GM10248 (cell line): ENCODE measurements at regions of chr14 and their contacts with region 1.

Region 1: GRCh38 chr14:75982266-75983018 is 647 bp upstream of the TGFB3 start:
- DNase-seq: peak; percentile 82
- CTCF ChIP-seq: peak; percentile 84

Region 2: GRCh38 chr14:75487155-75487671 is 495.2 kb before region 1 on chr14:
- CTCF ChIA-PET with region 1: no interaction called
- POLR2A ChIA-PET with region 1: no interaction called
- DNase-seq: peak; percentile 56
- CTCF ChIP-seq: no peak

Region 3: GRCh38 chr14:75702616-75703261 is 279.7 kb before region 1 on chr14:
- CTCF ChIA-PET with region 1: interaction called, 216 read pairs
- POLR2A ChIA-PET with region 1: no interaction called
- DNase-seq: no peak
- CTCF ChIP-seq: no peak

Region 4: DNA sequence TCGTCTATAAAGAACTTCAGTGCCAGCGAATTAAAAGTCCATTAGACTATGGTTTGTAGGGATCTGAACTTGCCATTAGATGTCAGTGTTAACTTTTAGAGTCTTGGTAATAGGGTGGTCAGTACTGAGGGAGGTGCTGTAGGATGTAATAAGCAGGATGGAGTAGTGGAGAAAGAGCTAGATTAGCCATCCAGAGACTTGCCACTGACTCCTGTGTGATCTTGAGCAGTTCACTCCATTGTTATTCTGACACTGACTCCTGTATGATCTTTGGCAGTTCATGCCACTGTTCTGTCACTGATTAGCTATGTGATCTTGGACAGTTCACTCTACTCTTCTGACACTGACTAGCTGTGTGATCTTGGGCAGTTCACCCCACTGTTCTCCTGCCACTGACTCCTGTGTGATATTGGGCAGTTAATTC is 187.8 kb before region 1 on chr14:
- CTCF ChIA-PET with region 1: interaction called, 13 read pairs
- POLR2A ChIA-PET with region 1: no interaction called
- DNase-seq: no peak
- CTCF ChIP-seq: no peak

Region 5: DNA sequence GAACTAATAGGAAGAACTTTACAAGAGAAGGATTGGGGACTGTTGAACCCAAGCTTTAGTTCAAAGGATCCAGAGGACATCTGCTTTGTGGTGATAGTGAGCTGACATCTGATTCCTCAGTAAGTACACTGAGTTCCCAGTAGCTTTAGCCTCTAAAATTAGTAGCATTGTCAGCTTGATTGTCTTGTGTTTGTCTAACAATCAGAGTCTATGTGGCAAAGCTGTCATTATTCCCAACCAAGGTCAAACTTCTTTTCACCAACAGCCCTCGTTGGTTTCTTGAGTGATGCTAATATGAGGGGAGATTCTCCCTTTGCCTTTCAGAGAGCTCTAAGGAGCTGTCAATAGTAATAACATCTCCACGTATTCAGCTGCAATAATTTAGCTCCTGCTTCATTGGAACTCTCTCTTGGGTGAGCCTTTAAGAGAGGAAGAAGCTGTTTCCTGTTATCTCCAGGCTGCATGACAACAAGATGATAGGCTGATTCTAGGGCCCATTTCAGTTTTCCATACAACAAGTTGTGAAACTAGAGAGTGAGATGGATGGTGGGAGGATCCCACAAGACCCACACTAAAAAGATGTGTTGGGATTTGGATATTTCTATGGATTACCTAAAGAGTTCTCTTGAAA is 47.3 kb before region 1 on chr14:
- CTCF ChIA-PET with region 1: interaction called, 18 read pairs
- POLR2A ChIA-PET with region 1: no interaction called
- DNase-seq: no peak
- CTCF ChIP-seq: no peak

Region 6: GRCh38 chr14:75968456-75968855 is 14.0 kb before region 1 on chr14:
- CTCF ChIA-PET with region 1: interaction called, 35 read pairs
- POLR2A ChIA-PET with region 1: no interaction called
- DNase-seq: no peak
- CTCF ChIP-seq: no peak

Region 7: DNA sequence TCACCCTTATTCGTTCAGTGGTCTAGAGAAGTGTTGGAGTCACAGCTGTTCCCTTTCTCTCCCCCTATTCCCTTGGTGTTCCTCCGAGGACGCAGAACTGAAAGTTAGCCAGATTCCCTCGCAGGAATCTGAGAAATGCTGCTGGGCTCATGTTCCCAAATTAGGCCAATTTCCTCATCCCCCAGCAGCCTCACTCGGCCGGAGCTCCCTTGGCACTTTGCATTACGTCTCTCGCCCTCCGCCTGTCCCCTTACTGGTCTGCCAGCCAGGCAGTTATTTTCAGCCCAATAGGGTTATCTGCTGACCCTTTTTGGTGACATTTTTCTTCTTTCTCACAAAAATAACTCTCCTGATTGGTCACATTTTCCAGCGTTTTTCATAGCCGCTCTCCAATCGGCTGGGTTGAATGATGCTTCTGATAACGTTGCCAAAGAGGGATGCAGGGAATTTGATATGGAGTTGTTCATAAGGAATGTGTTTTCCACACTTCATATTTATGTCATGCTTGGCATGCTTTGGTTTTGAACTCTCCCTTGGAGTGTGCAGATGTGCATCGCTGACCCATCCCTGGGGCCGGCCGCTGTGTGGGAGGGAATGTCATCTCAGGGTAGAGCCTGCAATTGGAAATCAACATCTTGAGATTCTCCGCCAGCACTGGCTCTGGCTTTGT is 13.1 kb after region 1 on chr14:
- CTCF ChIA-PET with region 1: interaction called, 38 read pairs
- POLR2A ChIA-PET with region 1: no interaction called
- DNase-seq: no peak
- CTCF ChIP-seq: no peak